ENCODE measurements at regions of chr17 and their contacts with region 1.

Region 1: DNA sequence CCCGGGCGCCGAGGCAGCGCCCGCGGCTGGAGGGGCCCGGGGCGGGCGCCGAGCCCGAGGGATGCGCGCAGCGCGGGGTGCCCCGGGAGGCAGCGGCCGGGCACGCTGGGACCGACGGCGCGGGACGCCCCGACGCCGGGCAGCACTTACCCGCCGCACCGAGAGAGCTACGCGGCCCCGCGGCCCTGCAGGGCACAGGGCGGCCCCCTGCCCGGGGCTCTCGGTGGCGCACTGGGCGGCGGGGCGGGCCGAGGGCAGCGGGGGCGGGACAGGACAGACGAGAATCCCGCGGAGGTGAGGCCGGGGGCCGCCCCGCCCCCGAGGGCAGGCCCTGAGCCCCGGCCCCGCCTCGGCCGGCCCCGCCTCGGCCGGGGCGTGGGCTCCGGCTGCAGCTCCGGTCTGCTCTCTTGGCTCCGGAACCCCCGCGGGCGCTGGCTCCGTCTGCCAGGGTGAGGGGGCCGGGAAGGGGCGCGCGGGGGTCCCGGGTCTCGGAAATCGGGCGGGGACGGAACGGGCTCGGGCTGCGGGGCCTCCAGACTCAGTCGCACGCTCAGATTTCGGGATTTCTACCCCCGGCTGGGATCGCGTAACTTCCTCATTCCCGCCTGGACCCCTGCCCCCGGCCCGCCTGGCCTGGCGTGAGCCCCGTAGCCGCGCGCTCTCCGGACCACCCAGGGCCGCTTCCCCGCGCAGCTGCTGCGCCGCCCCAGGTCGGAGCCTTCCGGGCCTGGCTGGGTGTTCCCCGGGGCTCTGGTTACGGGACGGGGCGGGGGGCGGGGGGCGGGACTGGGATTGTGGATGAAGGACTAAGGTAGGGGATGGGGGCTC is at the start of gene PLD2:
- DNase-seq: peak; percentile 79
- H3K4me3 ChIP-seq: peak within 1 kb of the TSS; percentile 75 to 94 (median 83)
- H3K27ac ChIP-seq: peak within 1 kb of the TSS; percentile 22
- H3K4me1 ChIP-seq: peaks cover 15% of the 10 kb centered on the region
- H3K27me3 ChIP-seq: no peaks in the 10 kb centered on the region
- CTCF ChIP-seq: no peak
- total RNA-seq, gene PLD2: 22.2 to 42.9 TPM

Region 2: DNA sequence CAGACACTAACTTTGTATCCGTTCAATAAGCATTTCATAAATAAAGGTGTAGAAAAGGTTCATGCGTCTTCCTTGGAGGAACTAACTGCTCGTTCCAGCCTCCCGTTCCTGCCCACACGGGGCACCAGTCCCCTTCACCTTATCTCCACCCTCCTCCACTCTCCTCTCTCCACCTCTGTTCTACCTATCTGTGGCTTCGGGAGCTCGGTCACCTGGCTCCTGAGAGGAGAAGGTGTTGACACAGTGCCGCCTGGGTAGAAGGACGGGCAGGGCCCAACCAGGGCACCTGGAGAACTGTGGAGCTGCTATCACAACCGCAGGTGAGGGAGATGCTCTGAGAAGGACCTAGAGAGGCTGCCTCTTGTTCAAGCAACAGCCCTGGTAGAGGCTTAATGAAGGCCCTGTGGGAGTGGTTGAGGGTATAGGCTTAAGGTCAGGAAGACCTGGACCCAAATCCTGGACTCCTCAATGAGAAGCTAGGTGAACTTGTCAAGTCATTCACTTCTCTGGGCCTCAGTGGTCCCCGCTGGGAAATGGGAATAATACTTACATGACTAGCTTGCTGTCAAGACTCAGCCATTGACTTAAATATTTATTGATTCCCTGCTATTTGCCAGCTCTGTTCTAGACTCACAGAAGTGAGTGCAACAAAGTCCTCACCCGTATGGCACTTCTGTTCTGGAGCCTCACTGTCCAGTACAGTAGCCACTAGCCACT is 16.5 kb after region 1 on chr17:
- CTCF ChIA-PET with region 1: no interaction called
- dilution Hi-C with region 1: no loop called
- in situ Hi-C with region 1: no loop called
- intact Hi-C with region 1: no loop called
- DNase-seq: no peak
- H3K4me3 ChIP-seq: no peak overlapping the region
- H3K27ac ChIP-seq: no peak overlapping the region
- H3K4me1 ChIP-seq: no peaks in the 10 kb centered on the region
- H3K27me3 ChIP-seq: no peaks in the 10 kb centered on the region
- CTCF ChIP-seq: no peak

Region 3: GRCh38 chr17:4858882-4859260 is 51.9 kb after region 1 on chr17:
- CTCF ChIA-PET with region 1: no interaction called
- dilution Hi-C with region 1: loop called (anchors 5 kb)
- in situ Hi-C with region 1: no loop called
- intact Hi-C with region 1: loop called (anchors 2 kb)
- DNase-seq: peak; percentile 93
- H3K4me3 ChIP-seq: peak overlapping the region; percentile 50 to 91 (median 78)
- H3K27ac ChIP-seq: peak overlapping the region; percentile 83
- H3K4me1 ChIP-seq: peaks cover 60% of the 10 kb centered on the region
- H3K27me3 ChIP-seq: no peaks in the 10 kb centered on the region
- CTCF ChIP-seq: no peak